Activated T-helper 1 cell treated with anti-CD3 and anti-CD28 coated beads, Interleukin-12 subunit alpha, Interleukin-12 subunit beta, Interleukin-2, Interleukin-4 antibody, amounts not matched to agents 30 ng/mL and 10 ng/mL and 1 ng/mL, durations not matched to agents 14 hours and 24 hours and 36 hours (primary cell): ENCODE measurements at regions of chr12 and their contacts with region 1.

Region 1: GRCh38 chr12:69879041-69879960 is 54.3 kb downstream of the MYRFL start:
- DNase-seq: peak; percentile 45
- H3K4me3 Mint-ChIP-seq: no peak overlapping the region
- H3K27ac Mint-ChIP-seq: no peak overlapping the region
- H3K4me1 Mint-ChIP-seq: peaks cover 8% of the 10 kb centered on the region
- H3K27me3 Mint-ChIP-seq: peaks cover 12% of the 10 kb centered on the region

Region 2: DNA sequence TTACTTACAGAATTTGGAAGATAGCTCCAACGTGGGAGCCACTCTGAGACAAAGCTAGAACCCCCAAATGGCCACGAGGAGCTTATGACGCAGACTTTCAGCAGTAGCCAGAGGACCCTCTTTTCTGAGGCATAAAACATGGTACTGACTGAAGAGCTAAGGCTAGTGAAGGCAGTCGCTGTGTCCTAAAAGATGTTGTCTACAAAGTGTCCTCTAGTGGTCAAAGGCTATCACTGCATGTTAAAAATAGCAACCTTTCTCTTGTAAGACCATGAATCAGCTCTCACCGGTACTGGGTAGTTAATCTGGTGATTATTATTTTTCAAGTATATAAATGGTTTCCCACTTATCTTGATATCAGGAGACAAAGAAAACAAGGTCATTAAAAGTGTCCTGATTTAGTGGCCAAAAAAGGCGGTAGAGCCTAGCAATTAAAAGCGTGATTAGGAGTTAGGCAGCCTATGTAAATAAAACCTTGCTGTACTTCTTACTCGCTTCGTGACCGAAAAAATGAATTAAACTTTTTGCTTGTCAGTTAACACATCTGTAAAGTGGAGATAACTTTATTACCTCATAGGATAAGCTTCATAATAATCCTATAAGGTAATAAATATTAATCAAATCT is 1513.3 kb after region 1 on chr12:
- intact Hi-C with region 1: loop called (anchors 2 kb)
- DNase-seq: no peak
- H3K4me3 Mint-ChIP-seq: no peak overlapping the region
- H3K27ac Mint-ChIP-seq: no peak overlapping the region
- H3K4me1 Mint-ChIP-seq: no peaks in the 10 kb centered on the region
- H3K27me3 Mint-ChIP-seq: peaks cover 1% of the 10 kb centered on the region